Dendritic cell treated with granulocyte-macrophage colony-stimulating factor and Interleukin-4, amounts not matched to agents 40 ng/mL and 50 ng/mL, for 4 days (primary cell): ENCODE measurements at regions of chr19 and their contacts with region 1.

Region 1: GRCh38 chr19:33406521-33407139 is 33.1 kb downstream of the CEBPG start:
- H3K4me3 Mint-ChIP-seq: no peak overlapping the region
- H3K27ac Mint-ChIP-seq: peak overlapping the region; percentile 91
- H3K4me1 Mint-ChIP-seq: peaks cover 67% of the 10 kb centered on the region
- H3K27me3 Mint-ChIP-seq: no peaks in the 10 kb centered on the region

Region 2: DNA sequence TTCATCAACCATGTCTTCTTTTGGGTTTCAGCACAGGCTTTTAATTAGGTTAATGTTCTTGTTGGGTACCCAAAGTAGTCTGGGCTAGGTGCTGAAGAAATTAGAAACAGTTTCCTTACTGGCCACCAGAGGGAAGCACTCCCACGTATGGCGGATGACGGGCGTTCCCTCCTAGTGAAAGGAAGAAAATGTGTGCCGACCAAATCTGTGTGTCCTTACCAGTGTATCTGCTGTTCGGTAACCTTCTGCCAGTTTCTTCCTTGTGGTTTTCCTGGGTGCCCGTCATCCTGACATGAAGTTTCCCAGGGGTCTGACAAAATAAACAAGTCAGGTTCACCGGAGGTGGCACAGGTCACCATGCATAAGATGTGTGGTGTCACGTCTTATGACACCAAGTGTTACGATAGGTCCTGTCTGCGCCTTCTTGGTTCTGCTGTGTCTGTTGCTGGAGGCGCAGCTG is 280.7 kb before region 1 on chr19:
- intact Hi-C with region 1: loop called (anchors 1 kb)
- H3K4me3 Mint-ChIP-seq: no peak overlapping the region
- H3K27ac Mint-ChIP-seq: no peak overlapping the region
- H3K4me1 Mint-ChIP-seq: no peaks in the 10 kb centered on the region
- H3K27me3 Mint-ChIP-seq: no peaks in the 10 kb centered on the region

Region 3: GRCh38 chr19:33235269-33235995 is 171.2 kb before region 1 on chr19:
- intact Hi-C with region 1: loop called (anchors 1 kb)
- H3K4me3 Mint-ChIP-seq: no peak overlapping the region
- H3K27ac Mint-ChIP-seq: no peak overlapping the region
- H3K4me1 Mint-ChIP-seq: peaks cover 24% of the 10 kb centered on the region
- H3K27me3 Mint-ChIP-seq: peaks cover 4% of the 10 kb centered on the region

Region 4: DNA sequence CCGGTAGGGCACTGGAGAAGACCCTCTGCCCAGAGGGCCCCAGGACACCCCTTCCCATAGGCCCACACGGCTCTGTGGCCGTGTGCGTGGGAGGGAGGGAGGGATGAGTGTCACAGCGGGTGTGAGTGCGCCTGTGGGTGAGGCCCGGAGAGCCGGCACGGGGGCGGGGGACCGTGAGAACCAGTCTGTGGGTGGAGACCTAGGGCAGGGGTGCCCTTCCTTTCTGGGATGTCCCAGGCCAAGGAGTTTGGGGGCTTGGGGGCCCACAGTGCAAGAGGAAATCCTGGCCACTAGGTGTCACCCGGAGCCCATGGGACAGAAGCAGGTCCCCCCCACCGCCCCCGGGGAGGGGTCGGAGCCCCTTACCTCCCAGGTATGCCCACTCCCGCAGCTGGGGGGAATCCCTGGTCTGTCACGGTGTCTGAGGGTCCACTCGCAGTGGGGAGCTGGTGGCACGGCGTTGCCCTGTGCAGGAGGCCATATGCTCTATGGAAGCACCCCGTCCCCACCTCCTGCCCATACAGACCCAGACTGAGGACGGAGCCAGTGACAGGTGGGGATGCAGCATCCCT is 165.0 kb before region 1 on chr19:
- intact Hi-C with region 1: loop called (anchors 1 kb)
- H3K4me3 Mint-ChIP-seq: no peak overlapping the region
- H3K27ac Mint-ChIP-seq: peak overlapping the region; percentile 31
- H3K4me1 Mint-ChIP-seq: peaks cover 44% of the 10 kb centered on the region
- H3K27me3 Mint-ChIP-seq: peaks cover 4% of the 10 kb centered on the region

Region 5: GRCh38 chr19:33373701-33374421 is 32.8 kb before region 1 on chr19 and contains the start of gene CEBPG:
- intact Hi-C with region 1: no loop called
- H3K4me3 Mint-ChIP-seq: peak within 1 kb of the TSS; percentile 87
- H3K27ac Mint-ChIP-seq: peak within 1 kb of the TSS; percentile 95
- H3K4me1 Mint-ChIP-seq: peaks cover 56% of the 10 kb centered on the region
- H3K27me3 Mint-ChIP-seq: no peaks in the 10 kb centered on the region